IMR-90 (cell line): ENCODE measurements at regions of chr5 and their contacts with region 1.

Region 1: GRCh38 chr5:179806250-179807222 is at the start of gene MGAT4B:
- DNase-seq: peak; percentile 70
- ATAC-seq: peak; percentile 87
- H3K4me3 ChIP-seq: peak within 1 kb of the TSS; percentile 98
- H3K27ac ChIP-seq: peak within 1 kb of the TSS; percentile 91
- H3K4me1 ChIP-seq: peaks cover 20% of the 10 kb centered on the region
- H3K27me3 ChIP-seq: no peaks in the 10 kb centered on the region
- CTCF ChIP-seq: no peak
- POLR2A ChIP-seq: peak; percentile 57
- RAD21 ChIP-seq: no peak
- total RNA-seq, gene MGAT4B: 53.9 and 73.7 TPM in 2 replicates

Region 2: DNA sequence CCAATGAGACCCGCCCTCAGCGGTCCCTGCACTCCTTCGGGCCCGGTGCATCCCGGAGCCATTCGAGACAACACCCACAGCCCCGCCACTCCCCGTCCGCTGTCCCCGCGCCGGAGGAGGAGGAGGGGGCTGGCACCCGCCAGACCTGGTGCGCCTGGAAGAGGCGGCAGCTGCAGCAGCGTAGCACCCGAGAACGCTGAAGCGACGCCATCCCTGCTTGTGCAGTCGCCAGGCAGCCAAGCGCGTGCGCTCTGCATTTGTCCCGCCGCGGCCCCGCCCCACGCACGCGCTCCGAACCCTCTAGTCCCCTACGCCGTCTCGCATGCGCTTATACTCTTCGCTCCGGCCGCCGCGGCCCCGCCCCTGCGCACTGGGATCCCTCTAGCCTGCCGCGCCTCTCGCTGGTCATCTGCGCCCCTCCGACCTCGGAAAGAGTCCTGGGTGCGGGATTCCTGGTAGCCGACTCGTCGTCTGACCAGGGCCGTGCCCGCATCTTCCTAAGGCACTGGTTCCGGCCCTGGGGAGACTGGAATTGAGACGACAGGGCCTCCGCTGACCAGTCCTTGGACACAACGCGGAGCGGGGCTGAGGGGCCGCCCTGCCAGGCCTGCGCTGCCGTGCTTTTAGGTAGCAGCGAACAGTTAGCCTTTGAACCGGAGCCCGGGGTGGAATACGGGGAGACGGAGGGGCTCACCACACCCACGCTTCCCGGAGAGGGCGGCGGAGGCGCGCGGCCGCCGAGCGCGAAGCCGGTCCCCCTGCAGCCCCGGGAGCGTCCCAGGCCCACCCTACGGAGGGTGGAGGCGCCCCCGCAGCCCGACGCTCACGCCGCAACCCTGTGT is 52.3 kb after region 1 on chr5 and contains the start of gene MRNIP:
- CTCF ChIA-PET with region 1: no interaction called
- POLR2A ChIA-PET with region 1: no interaction called
- dilution Hi-C with region 1: no loop called
- in situ Hi-C with region 1: no loop called
- intact Hi-C with region 1: loop called (anchors 5 kb)
- DNase-seq: peak; percentile 91
- ATAC-seq: peak; percentile 99
- H3K4me3 ChIP-seq: peak within 1 kb of the TSS; percentile 92
- H3K27ac ChIP-seq: peak within 1 kb of the TSS; percentile 95
- H3K4me1 ChIP-seq: no peaks in the 10 kb centered on the region
- H3K27me3 ChIP-seq: no peaks in the 10 kb centered on the region
- CTCF ChIP-seq: no peak; the same call in 1 of the 2 replicates
- POLR2A ChIP-seq: peak; percentile 46
- RAD21 ChIP-seq: 0 out of 2 replicates have a peak, but pooled peaks have one; percentile 21
- total RNA-seq, gene MRNIP: 6.6 and 7.2 TPM in 2 replicates